Pancreas (tissue), 10 donors: ENCODE measurements at regions of chr1 and their contacts with region 1.

Region 1: DNA sequence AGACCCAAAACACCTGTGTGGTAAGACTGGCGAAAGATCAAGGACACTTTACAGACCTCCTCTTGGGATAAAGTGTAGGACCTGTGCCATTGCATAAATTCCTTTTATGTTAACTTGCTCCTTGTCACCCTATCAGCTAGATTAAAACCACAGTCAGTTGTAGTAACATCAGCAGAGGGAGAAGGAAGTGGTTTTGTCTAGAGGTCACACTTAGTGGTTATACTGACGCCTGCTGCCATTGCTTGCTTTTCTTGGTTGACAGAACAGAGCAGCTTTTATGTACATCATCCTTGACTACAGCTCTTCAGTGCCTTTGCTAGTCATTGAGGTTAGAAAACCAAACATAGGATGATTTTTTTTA is 101.4 kb downstream of the PBX1 start:
- DNase-seq: no peak
- ATAC-seq: peak in 2 of 4 donors; percentile 77 to 78
- H3K4me3 ChIP-seq: no peak overlapping the region
- H3K27ac ChIP-seq: peak overlapping the region; percentile 78 to 91 (median 86)
- H3K4me1 ChIP-seq: peaks cover 70 to 85% (median 81%) of the 10 kb centered on the region in 3 donors
- H3K27me3 ChIP-seq: no peaks in the 10 kb centered on the region
- CTCF ChIP-seq: no peak

Region 2: GRCh38 chr1:164780863-164781262 is 120.5 kb after region 1 on chr1:
- intact Hi-C with region 1: loop called in 2 of 3 experiments (anchors 5 to 10 kb)
- DNase-seq: no peak
- ATAC-seq: peak; percentile 45 to 61 (median 54)
- H3K4me3 ChIP-seq: no peak overlapping the region
- H3K27ac ChIP-seq: peak overlapping the region; percentile 3 to 70 (median 24)
- H3K4me1 ChIP-seq: peaks cover 73 to 78% (median 74%) of the 10 kb centered on the region in 3 donors
- H3K27me3 ChIP-seq: no peaks in the 10 kb centered on the region
- CTCF ChIP-seq: no peak

Region 3: DNA sequence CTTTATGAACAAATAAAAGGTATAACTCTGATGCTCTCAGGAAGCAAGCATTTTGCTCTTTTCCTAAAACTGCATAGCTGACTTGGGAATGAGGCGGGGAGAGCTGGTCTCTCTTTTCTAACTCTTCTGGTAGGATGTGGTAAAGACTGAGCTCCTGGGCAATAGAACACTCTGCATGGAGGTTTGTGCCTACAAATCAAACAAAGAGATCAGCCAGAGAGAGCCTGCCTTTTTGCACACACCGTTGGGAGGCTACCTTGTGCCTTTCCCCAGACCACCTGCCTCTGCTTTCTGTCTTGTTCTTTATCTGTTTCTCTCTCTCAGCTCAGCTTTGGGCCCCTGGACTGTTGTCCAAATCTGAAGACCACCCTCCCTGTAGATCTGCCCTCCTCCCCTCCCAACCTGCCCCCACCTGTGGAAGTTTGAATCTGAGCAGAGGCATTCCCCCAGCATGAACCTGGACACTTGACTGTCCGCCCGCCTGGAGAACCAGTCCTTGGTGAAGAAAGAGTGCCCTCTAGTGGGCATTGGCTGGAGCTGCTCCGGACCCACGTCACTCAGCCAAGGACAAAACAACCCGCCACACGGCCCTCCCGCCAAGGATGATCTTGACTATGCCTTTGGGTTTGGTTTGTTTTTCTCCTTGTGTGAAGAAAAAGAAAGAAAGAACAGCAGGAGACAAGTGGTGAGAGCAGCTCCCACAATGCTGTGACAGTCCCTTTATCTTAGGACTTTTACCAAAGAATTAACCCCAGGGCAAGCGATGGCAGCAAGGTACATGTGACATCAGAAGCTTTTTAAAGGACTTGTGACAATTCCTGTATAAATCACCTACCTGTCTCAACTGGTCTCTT is 126.8 kb after region 1 on chr1:
- intact Hi-C with region 1: loop called in 2 of 3 experiments (anchors 5 to 10 kb)
- DNase-seq: peak; percentile 77 to 91 (median 86)
- ATAC-seq: peak; percentile 89 to 95 (median 92)
- H3K4me3 ChIP-seq: no peak overlapping the region
- H3K27ac ChIP-seq: peak overlapping the region; percentile 40 to 80 (median 62)
- H3K4me1 ChIP-seq: peaks cover 38 to 53% (median 49%) of the 10 kb centered on the region in 3 donors
- H3K27me3 ChIP-seq: no peaks in the 10 kb centered on the region
- CTCF ChIP-seq: peak; percentile 76 to 93 (median 82)